Left cardiac atrium (tissue), 4 donors: ENCODE measurements at regions of chr2 and their contacts with region 1.

Region 1: GRCh38 chr2:64330281-64331113 is 123.5 kb upstream of the LGALSL start:
- DNase-seq: peak; percentile 78
- ATAC-seq: peak; percentile 73 to 79

Region 2: GRCh38 chr2:64391424-64391823 is 60.9 kb after region 1 on chr2:
- intact Hi-C with region 1: no loop called
- DNase-seq: no peak
- ATAC-seq: peak; percentile 34 to 38

Region 3: DNA sequence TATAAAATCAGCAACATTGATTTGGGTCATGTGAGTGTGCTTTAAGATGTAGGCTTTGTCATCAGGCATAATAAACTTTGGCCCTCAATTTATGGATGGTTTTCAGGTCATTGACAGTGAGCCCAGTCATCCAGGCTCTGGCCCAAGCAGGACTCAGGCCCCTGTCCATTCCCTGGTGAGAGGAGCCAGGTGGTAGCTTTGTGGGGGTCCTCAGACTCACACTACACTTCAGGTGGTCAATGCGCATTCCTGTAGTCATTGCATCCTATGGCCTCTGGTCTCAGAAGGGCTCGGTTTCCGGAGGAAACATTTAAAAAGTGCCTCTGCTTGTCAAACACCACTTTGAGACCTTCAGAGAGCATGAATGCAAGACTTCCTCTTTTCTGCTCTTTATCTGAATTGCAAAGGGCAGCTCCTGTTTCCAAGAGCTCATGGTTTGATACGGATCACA is 143.6 kb after region 1 on chr2:
- intact Hi-C with region 1: no loop called
- DNase-seq: no peak
- ATAC-seq: no peak

Region 4: DNA sequence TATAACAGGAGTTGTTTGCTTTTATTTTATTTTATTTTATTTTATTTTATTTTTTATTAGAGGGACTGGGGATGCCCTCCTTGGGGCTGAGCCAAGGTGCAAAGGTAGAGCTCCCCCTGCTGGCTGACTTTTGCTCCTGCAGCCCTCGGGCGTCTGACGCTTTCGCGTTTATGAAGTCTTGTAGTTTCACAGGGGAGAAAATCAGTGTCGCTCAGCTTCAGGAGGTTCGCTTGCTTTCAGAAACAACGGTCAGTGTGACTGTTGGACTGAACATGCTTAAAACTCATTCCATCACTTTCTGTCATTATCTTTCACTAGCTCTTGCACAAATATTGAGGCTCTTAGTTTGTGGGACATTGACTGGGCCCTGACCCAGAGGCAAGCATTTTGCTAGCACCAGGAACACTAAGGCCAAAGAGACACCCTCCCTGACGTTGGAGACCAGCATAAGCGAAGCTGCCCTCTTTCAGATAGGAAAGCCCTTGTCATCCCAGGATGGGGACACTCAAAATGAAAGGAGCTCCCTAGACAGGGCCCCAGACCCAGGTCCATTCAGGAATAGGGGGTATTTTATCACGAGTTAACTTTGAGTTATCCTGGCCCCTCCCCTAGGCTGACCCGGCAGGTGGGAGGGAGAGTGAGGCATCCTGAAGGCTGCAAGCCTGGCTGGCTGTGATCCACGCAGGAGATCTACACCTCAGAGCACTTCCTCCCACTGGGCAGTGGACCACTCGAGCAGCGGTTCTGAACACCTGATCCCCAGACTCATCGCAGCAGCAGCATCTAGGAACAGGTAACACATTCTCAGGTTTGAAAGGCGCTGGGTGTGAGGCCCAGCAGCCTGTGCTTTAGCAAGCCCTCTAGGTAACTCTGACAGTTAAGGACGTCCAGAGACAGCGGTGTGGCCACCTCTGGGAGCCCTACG is 157.8 kb after region 1 on chr2:
- intact Hi-C with region 1: loop called (anchors 1 to 2 kb)
- DNase-seq: peak; percentile 67
- ATAC-seq: peak; percentile 68 to 77

Region 5: GRCh38 chr2:64562148-64562784 is 231.8 kb after region 1 on chr2:
- intact Hi-C with region 1: loop called (anchors 2 to 10 kb)
- DNase-seq: no peak
- ATAC-seq: no peak

Region 6: GRCh38 chr2:64622443-64623241 is 292.1 kb after region 1 on chr2:
- intact Hi-C with region 1: no loop called
- DNase-seq: no peak
- ATAC-seq: no peak

Region 7: GRCh38 chr2:64873472-64873924 is 543.0 kb after region 1 on chr2:
- intact Hi-C with region 1: loop called in 1 of 2 experiments (anchors 5 kb)
- DNase-seq: peak; percentile 76
- ATAC-seq: peak; percentile 79 to 85